ENCODE measurements at regions of chr14 and their contacts with region 1.

Region 1: DNA sequence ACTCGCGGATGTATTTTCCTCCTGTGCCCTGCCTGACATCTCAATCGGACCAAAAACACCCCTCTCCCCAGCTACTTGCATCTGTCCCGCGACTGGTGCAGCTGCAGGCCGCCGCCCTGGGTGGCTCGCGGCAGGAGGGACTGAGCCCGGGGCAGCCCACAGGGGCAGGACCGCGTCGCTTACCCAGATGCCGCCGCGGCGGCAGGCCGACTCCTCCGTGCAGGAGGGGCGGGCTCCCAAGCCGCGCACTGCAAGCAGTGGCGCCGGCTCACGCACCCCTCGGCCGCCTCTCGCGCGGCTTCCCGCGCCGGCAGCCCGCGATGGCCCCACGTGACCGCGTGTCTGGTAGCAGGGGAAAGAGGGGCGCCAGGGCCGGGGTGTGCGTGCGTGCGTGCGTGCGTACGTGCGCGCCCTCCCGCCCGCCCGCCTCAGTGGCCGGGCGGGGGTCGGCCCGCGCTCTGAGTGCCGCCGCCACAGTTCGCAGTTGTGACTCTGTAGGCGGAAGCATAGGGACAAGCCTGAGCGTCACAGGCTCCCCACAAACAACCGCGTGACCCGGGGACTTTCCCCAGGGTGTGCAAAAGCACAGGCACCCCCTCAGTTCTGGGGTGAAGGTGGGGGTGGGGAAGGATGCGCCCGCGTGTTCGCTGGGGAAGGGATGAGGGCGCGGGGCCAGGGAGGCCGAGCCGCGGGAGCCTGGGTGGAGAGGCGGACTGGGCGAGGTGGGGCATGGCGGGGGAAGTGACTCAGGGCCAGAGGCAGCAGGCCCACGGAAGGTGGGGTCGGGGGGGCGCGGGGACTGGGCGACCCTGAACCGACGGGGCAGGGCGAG is at the start of gene ZBTB25:
- DNase-seq: peak; percentile 90
- ATAC-seq: peak; percentile 85
- H3K4me3 ChIP-seq: peak within 1 kb of the TSS; percentile 93 to 98 (median 96)
- H3K27ac ChIP-seq: peak within 1 kb of the TSS; percentile 99
- H3K4me1 ChIP-seq: peaks cover 62% of the 10 kb centered on the region
- H3K27me3 ChIP-seq: no peaks in the 10 kb centered on the region; a peak in 1 of 5 replicates
- CTCF ChIP-seq: 0 out of 2 replicates have a peak, but pooled peaks have one; percentile 5
- EP300 ChIP-seq: no peak
- POLR2A ChIP-seq: peak in 1 of 2 experiments; percentile 83
- RAD21 ChIP-seq: peak; percentile 14; the same call in 1 of the 2 replicates
- total RNA-seq, gene ZBTB25: 3.0 and 3.5 TPM in 2 replicates

Region 2: GRCh38 chr14:64387694-64388532 is 115.8 kb before region 1 on chr14 and contains the start of gene MTHFD1:
- CTCF ChIA-PET with region 1: no interaction called
- POLR2A ChIA-PET with region 1: interaction called, 17 read pairs
- in situ Hi-C with region 1: no loop called
- intact Hi-C with region 1: no loop called
- DNase-seq: peak; percentile 99
- ATAC-seq: peak; percentile 94
- H3K4me3 ChIP-seq: peak within 1 kb of the TSS; percentile 66 to 81 (median 66)
- H3K27ac ChIP-seq: peak within 1 kb of the TSS; percentile 84
- H3K4me1 ChIP-seq: peaks cover 67% of the 10 kb centered on the region
- H3K27me3 ChIP-seq: no peaks in the 10 kb centered on the region
- CTCF ChIP-seq: no peak
- EP300 ChIP-seq: no peak
- POLR2A ChIP-seq: peak; percentile 59 to 84
- RAD21 ChIP-seq: 0 out of 2 replicates have a peak, but pooled peaks have one; percentile 15
- total RNA-seq, gene MTHFD1: 106 and 186 TPM in 2 replicates

Region 3: DNA sequence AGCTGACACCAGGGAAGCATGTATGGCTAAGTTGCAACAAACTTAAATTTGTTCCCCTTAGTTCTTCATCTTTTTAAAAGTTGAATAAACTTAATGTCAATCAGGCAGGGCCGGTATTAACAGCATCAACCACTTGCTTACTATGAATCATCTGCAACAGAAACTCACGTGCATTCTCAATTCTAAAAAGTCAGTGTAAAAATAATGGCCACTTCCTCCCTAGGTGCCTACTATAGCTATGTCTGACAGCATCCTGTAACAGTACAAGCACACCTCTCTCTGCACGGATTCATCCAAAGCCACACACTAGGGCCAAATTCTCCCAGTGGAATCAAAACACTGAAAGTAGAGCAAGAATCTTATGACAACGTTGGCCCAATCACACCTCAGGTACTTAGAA is 94.7 kb after region 1 on chr14:
- CTCF ChIA-PET with region 1: no interaction called
- POLR2A ChIA-PET with region 1: no interaction called
- in situ Hi-C with region 1: no loop called
- intact Hi-C with region 1: no loop called
- DNase-seq: no peak
- ATAC-seq: no peak
- H3K4me3 ChIP-seq: no peak overlapping the region
- H3K27ac ChIP-seq: no peak overlapping the region
- H3K4me1 ChIP-seq: peaks cover 15% of the 10 kb centered on the region
- H3K27me3 ChIP-seq: no peaks in the 10 kb centered on the region; a peak in 1 of 5 replicates
- CTCF ChIP-seq: no peak
- EP300 ChIP-seq: no peak
- POLR2A ChIP-seq: no peak
- RAD21 ChIP-seq: no peak

Region 4: DNA sequence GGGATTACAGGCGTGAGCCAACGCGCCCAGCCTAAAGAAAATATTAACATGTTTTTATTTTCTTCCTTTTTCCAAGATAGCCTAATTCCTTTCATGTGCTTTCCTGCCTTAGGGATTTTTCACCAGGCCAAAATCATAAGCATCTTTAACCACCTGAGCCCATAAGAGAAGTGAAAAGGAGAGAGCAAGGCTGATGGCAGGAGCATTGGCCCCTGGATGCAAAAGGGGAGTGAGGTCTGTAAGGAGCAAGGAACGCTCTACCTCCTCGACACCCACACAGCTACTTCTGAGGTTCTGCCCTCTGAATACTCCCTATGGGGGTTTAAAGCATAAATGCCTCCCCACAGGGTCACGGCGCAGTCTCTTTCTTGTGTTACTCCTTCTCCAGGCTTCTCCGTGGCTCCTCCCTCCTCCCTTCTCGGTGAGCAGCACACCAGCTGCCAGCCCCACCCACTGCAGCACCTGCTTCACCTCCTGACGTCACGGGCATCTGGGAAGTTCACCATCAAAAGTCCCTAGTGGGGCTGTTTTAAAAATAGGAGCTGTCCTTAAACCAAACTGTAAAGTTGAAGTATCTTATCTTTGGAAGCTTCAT is 308.6 kb after region 1 on chr14:
- CTCF ChIA-PET with region 1: no interaction called
- POLR2A ChIA-PET with region 1: no interaction called
- in situ Hi-C with region 1: no loop called
- intact Hi-C with region 1: no loop called
- DNase-seq: no peak
- ATAC-seq: no peak
- H3K4me3 ChIP-seq: no peak overlapping the region
- H3K27ac ChIP-seq: no peak overlapping the region
- H3K4me1 ChIP-seq: no peaks in the 10 kb centered on the region
- H3K27me3 ChIP-seq: peaks cover 1 to 25% of the 10 kb centered on the region in 2 experiments; a peak in 3 of 5 replicates
- CTCF ChIP-seq: no peak
- EP300 ChIP-seq: no peak
- POLR2A ChIP-seq: no peak
- RAD21 ChIP-seq: no peak